Tibial artery (tissue), 4 donors: ENCODE measurements at regions of chr4 and their contacts with region 1.

Region 1: GRCh38 chr4:139501927-139502899 is 48.3 kb downstream of the RAB33B start:
- DNase-seq: no peak
- H3K4me3 ChIP-seq: no peak overlapping the region
- H3K27ac ChIP-seq: no peak overlapping the region
- H3K4me1 ChIP-seq: peaks cover 0 to 4% (median 0%) of the 10 kb centered on the region in 4 donors
- H3K27me3 ChIP-seq: no peaks in the 10 kb centered on the region
- CTCF ChIP-seq: no peak

Region 2: GRCh38 chr4:139642364-139642763 is 140.2 kb after region 1 on chr4:
- intact Hi-C with region 1: loop called (anchors 5 kb)
- DNase-seq: no peak
- H3K4me3 ChIP-seq: no peak overlapping the region
- H3K27ac ChIP-seq: no peak overlapping the region
- H3K4me1 ChIP-seq: no peaks in the 10 kb centered on the region
- H3K27me3 ChIP-seq: no peaks in the 10 kb centered on the region
- CTCF ChIP-seq: no peak